HCT116 (cell line): ENCODE measurements at regions of chr6 and their contacts with region 1.

Region 1: DNA sequence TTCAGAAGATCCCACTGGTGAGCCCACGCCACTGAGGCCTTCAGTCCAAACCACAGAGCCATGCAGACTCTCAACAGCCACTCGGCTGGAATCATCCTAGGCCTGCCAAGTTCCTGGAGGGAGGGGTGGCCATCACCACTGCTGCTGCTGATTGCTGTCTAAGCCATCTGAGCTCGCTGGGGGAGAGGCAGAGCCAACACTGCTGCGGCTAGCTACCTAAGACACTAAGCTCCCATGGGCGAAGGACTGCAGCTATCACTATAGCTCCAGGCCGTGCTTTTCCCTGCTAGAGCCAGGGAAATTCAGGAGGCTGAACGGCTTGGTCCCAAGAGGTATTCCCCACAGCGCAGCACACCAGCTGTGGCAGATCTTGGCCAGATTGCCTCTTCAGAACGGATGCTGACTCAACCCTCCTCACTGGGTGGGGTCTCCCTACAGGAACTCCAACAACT is 73.6 kb downstream of the TBC1D32 start:
- DNase-seq: no peak
- ATAC-seq: no peak
- H3K4me3 ChIP-seq: no peak overlapping the region
- H3K27ac ChIP-seq: no peak overlapping the region
- H3K4me1 ChIP-seq: no peaks in the 10 kb centered on the region
- H3K27me3 ChIP-seq: no peaks in the 10 kb centered on the region
- CTCF ChIP-seq: no peak
- POLR2A ChIP-seq: no peak
- RAD21 ChIP-seq: no peak

Region 2: GRCh38 chr6:120010075-120010474 is 1250.6 kb before region 1 on chr6:
- CTCF ChIA-PET with region 1: no interaction called
- POLR2A ChIA-PET with region 1: no interaction called
- RAD21 ChIA-PET with region 1: no interaction called
- intact Hi-C with region 1: loop called (anchors 5 kb)
- DNase-seq: no peak
- ATAC-seq: no peak
- H3K4me3 ChIP-seq: no peak overlapping the region
- H3K27ac ChIP-seq: no peak overlapping the region
- H3K4me1 ChIP-seq: no peaks in the 10 kb centered on the region
- H3K27me3 ChIP-seq: no peaks in the 10 kb centered on the region
- CTCF ChIP-seq: no peak
- POLR2A ChIP-seq: no peak
- RAD21 ChIP-seq: no peak

Region 3: GRCh38 chr6:121330516-121330915 is 69.8 kb after region 1 on chr6:
- CTCF ChIA-PET with region 1: no interaction called
- POLR2A ChIA-PET with region 1: no interaction called
- RAD21 ChIA-PET with region 1: no interaction called
- intact Hi-C with region 1: no loop called
- DNase-seq: no peak
- ATAC-seq: no peak
- H3K4me3 ChIP-seq: no peak overlapping the region
- H3K27ac ChIP-seq: no peak overlapping the region
- H3K4me1 ChIP-seq: peaks cover 0 to 19% of the 10 kb centered on the region in 2 experiments; a peak in 1 of 4 replicates
- H3K27me3 ChIP-seq: no peaks in the 10 kb centered on the region
- CTCF ChIP-seq: no peak
- POLR2A ChIP-seq: no peak
- RAD21 ChIP-seq: no peak

Region 4: DNA sequence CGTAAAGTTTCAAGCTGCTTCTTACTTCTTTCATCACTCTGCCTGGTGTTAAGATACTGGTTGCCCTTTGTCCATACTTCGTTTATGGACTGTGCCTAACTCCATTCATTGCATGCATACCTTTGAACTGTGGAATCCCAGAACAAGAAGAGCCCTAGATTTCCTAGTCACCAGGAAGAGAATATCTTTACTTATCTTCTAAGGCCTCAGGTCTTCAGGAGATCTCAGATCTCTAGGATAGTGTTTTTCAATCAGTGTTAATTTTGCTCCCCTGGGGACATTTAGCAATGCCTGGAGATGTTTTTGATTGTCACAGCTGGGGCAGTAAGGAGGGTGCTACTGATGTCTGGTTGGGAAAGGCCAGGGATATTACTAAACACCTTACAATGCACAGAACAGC is 139.3 kb after region 1 on chr6:
- CTCF ChIA-PET with region 1: no interaction called
- POLR2A ChIA-PET with region 1: no interaction called
- RAD21 ChIA-PET with region 1: no interaction called
- intact Hi-C with region 1: no loop called
- DNase-seq: no peak
- ATAC-seq: no peak
- H3K4me3 ChIP-seq: no peak overlapping the region
- H3K27ac ChIP-seq: no peak overlapping the region
- H3K4me1 ChIP-seq: no peaks in the 10 kb centered on the region
- H3K27me3 ChIP-seq: no peaks in the 10 kb centered on the region
- CTCF ChIP-seq: no peak
- POLR2A ChIP-seq: no peak
- RAD21 ChIP-seq: no peak